ENCODE measurements at regions of chr13 and their contacts with region 1.

Region 1: DNA sequence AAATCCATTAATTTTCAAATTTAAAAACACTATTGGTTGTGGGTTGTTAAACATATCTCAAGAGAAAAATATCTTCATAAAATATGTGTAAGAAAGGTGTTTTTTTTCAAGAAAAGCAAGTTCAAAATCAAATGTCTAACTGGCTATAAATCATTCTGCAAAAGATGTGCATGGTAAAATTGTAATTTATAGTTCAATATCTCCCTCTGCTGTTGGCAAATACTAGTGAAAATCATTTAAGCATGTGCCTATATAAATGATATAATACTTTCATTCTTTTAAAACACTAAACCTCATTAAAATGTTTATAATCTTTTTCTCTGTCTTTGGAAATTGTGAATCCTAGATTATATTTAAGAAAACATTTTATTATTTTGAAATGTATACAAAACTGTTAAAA is 17.2 kb upstream of the SLITRK6 start:
- ATAC-seq: no peak
- H3K4me3 ChIP-seq: no peak overlapping the region
- H3K27ac ChIP-seq: no peak overlapping the region
- H3K4me1 ChIP-seq: no peaks in the 10 kb centered on the region

Region 2: GRCh38 chr13:84896128-84896527 is 920.3 kb before region 1 on chr13:
- in situ Hi-C with region 1: loop called in 7 of 9 experiments (anchors 10 to 25 kb)
- ATAC-seq: peak in 3 of 8 experiments; percentile 39 to 67 (median 44)
- H3K4me3 ChIP-seq: no peak overlapping the region
- H3K27ac ChIP-seq: no peak overlapping the region
- H3K4me1 ChIP-seq: no peaks in the 10 kb centered on the region

Measured in motor neuron (in vitro differentiated cells).